Panc1 (cell line): ENCODE measurements at regions of chr11 and their contacts with region 1.

Region 1: GRCh38 chr11:57530596-57531507 is at the start of gene TIMM10:
- DNase-seq: peak; percentile 91
- ATAC-seq: peak; percentile 100
- H3K4me3 ChIP-seq: peak within 1 kb of the TSS; percentile 75 to 99
- H3K27ac ChIP-seq: peak within 1 kb of the TSS; percentile 98
- H3K4me1 ChIP-seq: peaks cover 13% of the 10 kb centered on the region
- H3K27me3 ChIP-seq: no peaks in the 10 kb centered on the region
- CTCF ChIP-seq: no peak
- total RNA-seq, gene TIMM10: 152 TPM

Region 2: DNA sequence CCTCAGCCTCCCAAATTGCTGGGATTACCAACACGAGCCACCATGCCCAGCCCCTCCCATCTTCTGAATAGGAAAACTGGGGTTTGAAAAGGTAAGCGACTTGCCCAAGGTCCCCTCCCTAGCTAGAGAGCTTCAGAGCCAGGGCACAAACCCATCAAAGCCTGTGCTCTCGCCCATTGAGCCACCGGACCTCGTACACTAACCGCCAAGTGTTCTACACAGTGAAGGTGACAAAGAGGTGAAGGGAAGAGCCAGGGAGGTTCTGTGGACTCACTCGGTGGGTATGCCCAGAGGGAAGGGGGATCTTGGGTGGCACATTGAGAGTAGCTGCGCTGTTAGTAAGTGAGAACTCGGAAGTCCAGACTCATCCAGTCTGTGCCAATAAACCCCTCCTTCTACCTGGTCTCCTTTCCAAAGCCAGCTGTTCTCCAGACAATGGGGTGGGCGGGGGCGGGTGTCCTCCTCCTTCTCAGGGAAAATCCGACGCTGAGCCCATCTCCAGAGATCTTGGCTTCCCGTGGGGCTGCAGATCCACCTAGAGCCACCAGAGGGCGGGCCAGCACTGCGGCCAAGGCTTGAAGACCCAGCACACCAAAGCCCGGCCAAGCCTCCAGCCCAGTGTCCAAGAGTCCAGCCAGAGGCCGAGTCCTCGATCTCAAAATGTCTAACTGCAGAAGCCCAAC is 73.8 kb before region 1 on chr11:
- CTCF ChIA-PET with region 1: interaction called, 9 read pairs
- POLR2A ChIA-PET with region 1: no interaction called
- in situ Hi-C with region 1: no loop called
- intact Hi-C with region 1: loop called (anchors 1 kb)
- DNase-seq: peak; percentile 64
- ATAC-seq: peak; percentile 85
- H3K4me3 ChIP-seq: peak overlapping the region in 1 of 2 experiments; percentile 32; a peak in 1 of 4 replicates
- H3K27ac ChIP-seq: no peak overlapping the region
- H3K4me1 ChIP-seq: peaks cover 4% of the 10 kb centered on the region; the same call in 1 of the 2 replicates
- H3K27me3 ChIP-seq: peaks cover 6% of the 10 kb centered on the region; the same call in 1 of the 2 replicates
- CTCF ChIP-seq: peak; percentile 98

Region 3: GRCh38 chr11:57467508-57468157 is 63.2 kb before region 1 on chr11:
- CTCF ChIA-PET with region 1: no interaction called
- POLR2A ChIA-PET with region 1: no interaction called
- in situ Hi-C with region 1: no loop called
- intact Hi-C with region 1: no loop called
- DNase-seq: no peak
- ATAC-seq: no peak
- H3K4me3 ChIP-seq: no peak overlapping the region
- H3K27ac ChIP-seq: no peak overlapping the region
- H3K4me1 ChIP-seq: no peaks in the 10 kb centered on the region
- H3K27me3 ChIP-seq: no peaks in the 10 kb centered on the region
- CTCF ChIP-seq: no peak

Region 4: GRCh38 chr11:57493507-57494503 is 37.0 kb before region 1 on chr11:
- CTCF ChIA-PET with region 1: interaction called, 17 read pairs
- POLR2A ChIA-PET with region 1: no interaction called
- in situ Hi-C with region 1: no loop called
- intact Hi-C with region 1: loop called (anchors 5 kb)
- DNase-seq: no peak
- ATAC-seq: peak; percentile 65
- H3K4me3 ChIP-seq: no peak overlapping the region
- H3K27ac ChIP-seq: peak overlapping the region; percentile 59; the same call in 1 of the 2 replicates
- H3K4me1 ChIP-seq: no peaks in the 10 kb centered on the region
- H3K27me3 ChIP-seq: no peaks in the 10 kb centered on the region
- CTCF ChIP-seq: peak; percentile 93

Region 5: DNA sequence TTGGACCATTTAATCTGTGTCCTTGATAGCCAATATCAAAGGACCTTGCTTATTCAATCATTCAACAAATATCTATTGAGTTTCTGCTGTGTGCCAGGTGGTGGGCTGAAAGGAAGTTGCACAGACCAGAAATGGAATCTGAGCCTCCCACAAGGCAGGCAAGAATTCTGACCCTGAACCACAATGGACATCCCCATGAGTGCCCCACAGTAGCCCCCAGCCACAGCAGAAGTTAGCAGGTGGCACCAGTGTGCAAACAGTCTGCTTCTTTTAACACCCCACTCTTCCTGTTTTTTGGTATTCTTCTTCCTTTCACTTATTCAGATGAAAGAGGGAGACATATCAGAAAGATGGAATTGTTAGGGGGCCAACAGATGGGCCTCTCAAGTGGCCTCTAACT is 54.4 kb after region 1 on chr11:
- CTCF ChIA-PET with region 1: no interaction called
- POLR2A ChIA-PET with region 1: no interaction called
- in situ Hi-C with region 1: no loop called
- intact Hi-C with region 1: no loop called
- DNase-seq: no peak
- ATAC-seq: no peak
- H3K4me3 ChIP-seq: no peak overlapping the region
- H3K27ac ChIP-seq: no peak overlapping the region
- H3K4me1 ChIP-seq: no peaks in the 10 kb centered on the region
- H3K27me3 ChIP-seq: no peaks in the 10 kb centered on the region; the same call in 1 of the 2 replicates
- CTCF ChIP-seq: no peak

Region 6: GRCh38 chr11:57644748-57645688 is 114.2 kb after region 1 on chr11:
- CTCF ChIA-PET with region 1: interaction called, 15 read pairs
- POLR2A ChIA-PET with region 1: interaction called, 3 read pairs
- in situ Hi-C with region 1: no loop called
- intact Hi-C with region 1: loop called (anchors 1 kb)
- DNase-seq: no peak
- ATAC-seq: peak; percentile 77
- H3K4me3 ChIP-seq: no peak overlapping the region
- H3K27ac ChIP-seq: no peak overlapping the region
- H3K4me1 ChIP-seq: peaks cover 25% of the 10 kb centered on the region
- H3K27me3 ChIP-seq: peaks cover 10% of the 10 kb centered on the region; the same call in 1 of the 2 replicates
- CTCF ChIP-seq: peak; percentile 94